Right lobe of liver (tissue), 6 donors: ENCODE measurements at regions of chr5 and their contacts with region 1.

Region 1: DNA sequence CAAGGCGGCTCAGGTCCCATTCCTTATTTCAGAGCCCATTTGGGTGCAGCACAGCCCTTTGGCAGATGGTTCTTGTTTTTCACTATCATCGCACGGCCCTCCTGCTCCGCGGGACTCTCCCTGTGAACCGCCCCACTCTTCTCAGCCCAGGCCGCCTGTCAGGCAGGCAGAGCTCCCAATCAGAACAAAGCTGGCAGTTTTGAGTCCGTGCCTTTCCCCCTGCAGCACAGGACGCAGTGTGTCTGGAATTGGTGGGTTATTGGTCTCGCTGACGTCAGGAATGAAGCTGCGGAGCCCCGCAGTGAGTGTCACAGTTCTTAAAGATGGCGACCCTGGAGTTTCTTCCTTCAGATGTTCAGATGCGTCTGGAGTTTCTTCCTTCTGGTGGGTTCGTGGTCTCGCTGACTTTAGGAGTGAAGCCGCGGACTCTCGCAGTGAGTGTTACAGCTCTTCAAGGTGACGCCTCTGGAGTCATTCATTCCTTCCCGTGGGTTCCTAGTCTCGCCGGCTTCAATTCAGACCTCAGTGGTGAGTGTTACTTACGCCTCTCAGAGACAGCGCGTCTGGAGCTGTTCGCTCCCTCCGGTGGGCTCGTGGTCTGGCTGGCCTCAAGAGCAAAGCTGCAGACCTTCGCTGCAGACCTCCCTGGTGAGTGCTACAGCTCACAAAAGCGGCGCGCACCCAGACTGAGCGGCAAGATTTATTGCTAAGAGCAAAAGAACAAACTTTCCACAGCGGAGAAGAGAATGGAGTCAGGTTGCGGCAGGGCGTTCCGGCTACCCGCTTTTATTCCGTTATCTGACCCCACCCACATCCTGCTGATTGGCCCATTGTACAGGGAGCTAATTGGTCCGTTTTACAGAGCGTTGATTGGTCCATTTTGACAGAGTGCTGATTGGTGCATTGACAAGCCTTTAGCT is 7.5 kb downstream of the ZDHHC11B start:
- DNase-seq: peak in 2 of 3 donors; percentile 18 to 45
- ATAC-seq: no peak
- H3K4me3 ChIP-seq: no peak overlapping the region
- H3K27ac ChIP-seq: no peak overlapping the region
- H3K4me1 ChIP-seq: no peaks in the 10 kb centered on the region
- H3K27me3 ChIP-seq: no peaks in the 10 kb centered on the region
- CTCF ChIP-seq: no peak
- POLR2A ChIP-seq: no peak

Region 2: GRCh38 chr5:683551-684481 is 93.2 kb before region 1 on chr5:
- intact Hi-C with region 1: loop called in 1 of 2 experiments (anchors 10 kb)
- DNase-seq: peak in 1 of 3 donors; percentile 58
- ATAC-seq: peak; percentile 31 to 76 (median 48)
- H3K4me3 ChIP-seq: no peak overlapping the region
- H3K27ac ChIP-seq: no peak overlapping the region
- H3K4me1 ChIP-seq: no peaks in the 10 kb centered on the region
- H3K27me3 ChIP-seq: no peaks in the 10 kb centered on the region
- CTCF ChIP-seq: no peak
- POLR2A ChIP-seq: no peak